ENCODE measurements at regions of chr11 and their contacts with region 1.

Region 1: DNA sequence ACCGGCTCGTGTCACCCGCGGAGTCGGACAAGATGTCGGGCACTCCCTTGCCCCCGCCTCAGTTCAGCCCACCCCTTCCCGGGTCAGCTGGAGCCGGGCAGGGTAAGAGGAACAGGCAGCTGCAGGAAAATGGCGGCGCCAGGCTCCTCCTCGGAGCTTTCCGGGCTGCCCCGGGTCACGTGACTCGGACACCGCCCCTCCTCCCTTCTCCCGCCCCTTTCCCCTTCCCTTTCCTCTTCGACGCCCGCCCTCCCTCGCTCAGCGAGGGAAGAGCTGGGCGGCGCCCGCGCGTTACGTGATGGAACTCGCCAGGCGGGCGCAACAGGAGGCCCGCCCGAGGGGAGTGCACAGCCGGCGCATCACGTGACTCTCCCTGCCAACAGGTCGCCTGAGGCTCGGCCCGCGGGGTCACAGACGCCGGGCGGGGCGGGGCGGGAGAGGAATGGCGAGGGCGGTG is at the start of gene PICALM:
- DNase-seq: peak; percentile 99
- H3K4me3 ChIP-seq: peak within 1 kb of the TSS; percentile 74 to 90 (median 77)
- H3K27ac ChIP-seq: peak within 1 kb of the TSS; percentile 100
- H3K4me1 ChIP-seq: peaks cover 23% of the 10 kb centered on the region
- H3K27me3 ChIP-seq: no peaks in the 10 kb centered on the region
- CTCF ChIP-seq: no peak
- total RNA-seq, gene PICALM: 179 to 329 TPM

Region 2: DNA sequence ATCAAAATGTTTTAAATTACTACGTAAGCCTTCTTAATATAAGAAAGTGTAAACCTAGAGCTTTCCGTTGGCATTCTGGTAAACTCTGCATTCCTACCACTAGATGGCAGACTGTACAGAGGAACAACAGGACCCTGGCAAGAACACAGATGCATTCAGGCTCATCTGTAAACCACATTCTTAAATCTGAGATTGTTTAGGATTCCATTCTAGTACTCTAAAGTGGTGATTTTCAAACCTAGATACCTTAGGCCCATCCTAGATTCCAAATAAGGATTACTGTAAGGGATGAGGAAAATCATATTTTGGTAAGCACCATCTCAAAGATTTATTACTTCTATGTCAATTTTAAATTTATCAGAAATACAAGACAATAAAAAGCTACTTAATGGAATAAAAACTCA is 27.0 kb before region 1 on chr11:
- CTCF ChIA-PET with region 1: interaction called, 5 read pairs
- dilution Hi-C with region 1: no loop called
- in situ Hi-C with region 1: no loop called
- intact Hi-C with region 1: loop called (anchors 1 kb)
- DNase-seq: peak; percentile 76
- H3K4me3 ChIP-seq: peak overlapping the region in 1 of 3 experiments; percentile 50
- H3K27ac ChIP-seq: peak overlapping the region; percentile 61
- H3K4me1 ChIP-seq: peaks cover 32% of the 10 kb centered on the region
- H3K27me3 ChIP-seq: no peaks in the 10 kb centered on the region
- CTCF ChIP-seq: peak; percentile 82 to 86

Region 3: GRCh38 chr11:86081455-86081854 is 12.5 kb after region 1 on chr11:
- CTCF ChIA-PET with region 1: no interaction called
- dilution Hi-C with region 1: no loop called
- in situ Hi-C with region 1: no loop called
- intact Hi-C with region 1: no loop called
- DNase-seq: no peak
- H3K4me3 ChIP-seq: no peak overlapping the region
- H3K27ac ChIP-seq: no peak overlapping the region
- H3K4me1 ChIP-seq: no peaks in the 10 kb centered on the region
- H3K27me3 ChIP-seq: no peaks in the 10 kb centered on the region
- CTCF ChIP-seq: no peak

Region 4: GRCh38 chr11:86116386-86116726 is 47.4 kb after region 1 on chr11:
- CTCF ChIA-PET with region 1: interaction called, 4 read pairs
- dilution Hi-C with region 1: loop called (anchors 5 kb)
- in situ Hi-C with region 1: no loop called
- intact Hi-C with region 1: loop called (anchors 2 kb)
- DNase-seq: peak; percentile 94
- H3K4me3 ChIP-seq: peak overlapping the region in 2 of 3 experiments; percentile 20 to 27
- H3K27ac ChIP-seq: peak overlapping the region; percentile 98
- H3K4me1 ChIP-seq: peaks cover 27% of the 10 kb centered on the region
- H3K27me3 ChIP-seq: no peaks in the 10 kb centered on the region
- CTCF ChIP-seq: no peak

Region 5: GRCh38 chr11:86160546-86161149 is 91.7 kb after region 1 on chr11:
- CTCF ChIA-PET with region 1: no interaction called
- dilution Hi-C with region 1: no loop called
- in situ Hi-C with region 1: no loop called
- intact Hi-C with region 1: loop called (anchors 1 kb)
- DNase-seq: peak; percentile 93
- H3K4me3 ChIP-seq: no peak overlapping the region
- H3K27ac ChIP-seq: peak overlapping the region; percentile 65
- H3K4me1 ChIP-seq: peaks cover 58% of the 10 kb centered on the region
- H3K27me3 ChIP-seq: no peaks in the 10 kb centered on the region
- CTCF ChIP-seq: no peak

Region 6: GRCh38 chr11:86182976-86183584 is 114.1 kb after region 1 on chr11:
- CTCF ChIA-PET with region 1: no interaction called
- dilution Hi-C with region 1: loop called (anchors 5 kb)
- in situ Hi-C with region 1: no loop called
- intact Hi-C with region 1: no loop called
- DNase-seq: peak; percentile 95
- H3K4me3 ChIP-seq: no peak overlapping the region
- H3K27ac ChIP-seq: peak overlapping the region; percentile 87
- H3K4me1 ChIP-seq: peaks cover 19% of the 10 kb centered on the region
- H3K27me3 ChIP-seq: no peaks in the 10 kb centered on the region
- CTCF ChIP-seq: no peak

Measured in mammary epithelial cell (primary cell).